Mammary epithelial cell (primary cell): ENCODE measurements at regions of chr2 and their contacts with region 1.

Region 1: DNA sequence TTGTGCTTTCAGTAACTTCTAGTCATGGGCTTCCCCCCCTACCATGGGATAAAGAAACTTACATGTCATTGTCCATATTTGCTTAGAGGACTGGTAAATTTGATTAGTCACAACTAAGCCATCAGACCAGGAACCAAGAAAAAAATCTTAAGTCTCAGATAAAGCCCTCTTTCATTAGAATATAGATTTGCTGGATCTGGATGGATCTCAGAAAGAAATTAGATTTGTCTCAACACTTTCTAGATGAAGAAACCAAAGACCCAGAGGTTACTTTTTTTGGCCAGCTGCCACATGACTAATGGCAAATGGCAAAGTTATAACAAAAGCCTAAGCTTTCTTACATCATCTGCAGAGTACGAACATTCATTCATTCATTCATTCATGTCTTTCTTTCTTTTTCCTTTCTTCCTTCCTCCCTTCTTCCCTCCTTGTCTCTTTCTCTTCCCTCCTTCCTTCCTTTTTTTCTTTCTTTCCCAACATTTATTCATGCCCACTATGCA is 60.2 kb downstream of the CDCA7 start:
- DNase-seq: peak; percentile 86
- H3K4me3 ChIP-seq: no peak overlapping the region
- H3K27ac ChIP-seq: no peak overlapping the region
- H3K4me1 ChIP-seq: peaks cover 8% of the 10 kb centered on the region
- H3K27me3 ChIP-seq: no peaks in the 10 kb centered on the region
- CTCF ChIP-seq: no peak

Region 2: GRCh38 chr2:173427887-173428600 is 13.2 kb after region 1 on chr2:
- CTCF ChIA-PET with region 1: no interaction called
- dilution Hi-C with region 1: no loop called
- in situ Hi-C with region 1: no loop called
- intact Hi-C with region 1: loop called (anchors 2 kb)
- DNase-seq: peak; percentile 96
- H3K4me3 ChIP-seq: no peak overlapping the region
- H3K27ac ChIP-seq: peak overlapping the region; percentile 69
- H3K4me1 ChIP-seq: peaks cover 21% of the 10 kb centered on the region
- H3K27me3 ChIP-seq: peaks cover 12% of the 10 kb centered on the region
- CTCF ChIP-seq: no peak

Region 3: GRCh38 chr2:173555833-173556232 is 141.0 kb after region 1 on chr2:
- CTCF ChIA-PET with region 1: no interaction called
- dilution Hi-C with region 1: loop called (anchors 10 kb)
- in situ Hi-C with region 1: no loop called
- intact Hi-C with region 1: no loop called
- DNase-seq: no peak
- H3K4me3 ChIP-seq: no peak overlapping the region
- H3K27ac ChIP-seq: no peak overlapping the region
- H3K4me1 ChIP-seq: no peaks in the 10 kb centered on the region
- H3K27me3 ChIP-seq: peaks cover 14% of the 10 kb centered on the region
- CTCF ChIP-seq: no peak

Region 4: DNA sequence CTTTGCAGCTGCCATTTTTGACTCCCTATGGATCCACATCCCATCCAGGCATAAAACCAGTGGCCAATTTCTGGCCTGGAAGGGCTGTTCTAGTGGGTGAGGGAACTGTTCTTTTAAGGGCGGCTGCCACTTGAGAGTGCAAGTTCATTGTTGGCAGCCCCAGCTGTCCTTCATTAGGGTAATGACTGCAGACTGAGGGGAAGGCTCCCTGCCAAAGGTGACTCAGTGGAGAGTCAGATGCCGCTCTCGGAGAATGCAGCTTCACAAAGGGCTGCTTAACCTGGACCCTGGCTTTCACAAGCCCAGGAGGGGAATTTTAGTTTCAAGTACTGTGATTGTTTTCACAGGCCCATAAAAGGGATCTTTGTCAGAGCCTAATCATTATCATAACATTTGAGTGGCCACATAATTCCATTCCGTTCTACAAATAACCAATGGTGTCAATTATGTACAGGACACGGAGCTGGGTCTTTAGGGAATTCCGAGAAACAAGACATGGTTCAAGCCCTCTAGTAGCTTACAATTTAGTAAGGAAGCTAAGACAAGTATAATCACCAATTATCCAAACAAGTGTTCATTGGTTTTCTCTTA is 175.5 kb after region 1 on chr2:
- CTCF ChIA-PET with region 1: no interaction called
- dilution Hi-C with region 1: no loop called
- in situ Hi-C with region 1: no loop called
- intact Hi-C with region 1: no loop called
- DNase-seq: peak; percentile 99
- H3K4me3 ChIP-seq: peak overlapping the region; percentile 15 to 33 (median 28)
- H3K27ac ChIP-seq: peak overlapping the region; percentile 82
- H3K4me1 ChIP-seq: peaks cover 20% of the 10 kb centered on the region
- H3K27me3 ChIP-seq: no peaks in the 10 kb centered on the region
- CTCF ChIP-seq: no peak

Region 5: DNA sequence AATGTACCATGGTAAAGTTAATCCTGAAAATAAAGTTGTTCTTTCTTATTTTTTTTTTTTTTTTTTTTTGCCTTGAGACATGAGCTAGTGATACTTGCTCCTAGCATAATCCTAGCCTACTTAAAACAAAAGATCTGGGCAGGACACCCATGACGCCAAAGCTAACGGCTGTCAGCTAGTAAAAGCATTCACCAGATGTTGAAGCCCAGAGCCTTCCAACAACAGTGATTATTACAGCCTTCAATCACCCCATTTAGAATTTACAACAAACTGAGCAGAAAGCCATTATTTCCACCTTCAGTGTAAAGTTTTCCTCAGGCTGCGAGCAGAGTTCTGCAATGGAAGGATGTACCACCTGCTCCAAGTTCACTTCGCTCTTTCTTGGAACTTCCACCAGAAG is 290.8 kb after region 1 on chr2:
- CTCF ChIA-PET with region 1: no interaction called
- dilution Hi-C with region 1: no loop called
- in situ Hi-C with region 1: no loop called
- intact Hi-C with region 1: no loop called
- DNase-seq: no peak
- H3K4me3 ChIP-seq: no peak overlapping the region
- H3K27ac ChIP-seq: no peak overlapping the region
- H3K4me1 ChIP-seq: no peaks in the 10 kb centered on the region
- H3K27me3 ChIP-seq: no peaks in the 10 kb centered on the region
- CTCF ChIP-seq: no peak